ENCODE measurements at regions of chrX and their contacts with region 1.

Region 1: DNA sequence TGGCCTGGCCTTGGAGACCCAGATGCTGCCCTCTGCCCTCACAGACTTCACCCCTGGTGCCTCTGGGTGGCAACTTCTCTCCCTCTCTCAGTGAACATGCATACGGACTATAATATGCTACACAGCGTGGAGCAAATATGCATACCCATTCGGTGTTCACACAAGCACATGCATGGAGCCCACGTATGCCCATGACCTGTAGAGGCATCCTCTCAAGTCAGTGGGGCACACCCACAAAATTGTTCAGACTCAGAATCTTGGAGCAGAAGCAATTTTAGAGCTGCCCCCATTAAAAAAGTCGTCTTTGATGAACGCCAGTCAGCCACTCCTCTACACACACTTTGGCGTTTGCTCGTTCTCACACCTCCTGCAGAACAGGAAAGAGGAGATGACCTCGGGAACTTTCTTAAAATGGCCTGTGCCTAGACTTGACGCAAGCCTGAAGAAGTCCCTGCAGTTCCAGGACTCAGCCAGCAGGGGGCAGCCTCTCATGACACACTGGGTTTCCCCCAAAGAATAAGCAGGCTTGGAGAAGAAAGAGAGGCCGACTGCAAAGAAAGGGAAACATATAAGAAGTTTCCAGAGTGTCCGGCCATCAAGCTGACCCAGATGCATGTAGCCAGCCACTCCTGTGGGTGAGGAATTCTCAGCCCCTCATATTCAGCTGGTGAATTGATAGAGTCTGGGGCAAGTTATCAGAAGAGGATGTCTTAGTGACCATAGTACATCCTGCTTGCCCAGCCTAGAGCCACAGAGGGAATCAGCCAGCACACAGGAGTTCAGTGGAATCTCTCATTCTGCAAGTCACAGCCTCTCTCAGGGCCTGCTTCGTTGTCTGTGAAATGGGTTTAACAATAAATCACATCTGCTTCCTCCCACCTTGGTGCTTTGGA is 17.3 kb downstream of the APLN start:
- DNase-seq: peak; percentile 58 to 92 (median 72)
- H3K4me3 ChIP-seq: no peak overlapping the region
- H3K27ac ChIP-seq: no peak overlapping the region
- H3K4me1 ChIP-seq: no peaks in the 10 kb centered on the region
- H3K27me3 ChIP-seq: no peaks in the 10 kb centered on the region
- CTCF ChIP-seq: peak; percentile 80 to 91 (median 88)
- POLR2A ChIP-seq: no peak

Region 2: DNA sequence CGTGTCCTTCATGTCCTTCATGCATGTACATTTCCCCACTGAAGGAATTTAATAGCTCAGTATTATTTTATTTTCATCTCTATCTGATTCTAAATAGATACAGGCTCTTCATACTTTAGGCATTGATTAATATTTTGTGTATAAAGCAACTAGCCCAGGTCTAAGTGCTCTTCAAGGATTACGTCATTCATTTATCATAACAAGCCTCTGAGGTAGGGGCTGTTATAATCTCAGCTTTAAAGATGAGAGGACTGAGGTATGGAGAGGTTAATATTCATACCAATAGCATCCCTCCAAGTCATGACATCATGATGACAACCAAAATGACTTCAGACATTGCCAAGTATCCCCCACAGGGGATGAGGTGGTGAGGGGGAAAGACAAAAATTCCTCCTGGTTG is 426.1 kb before region 1 on chrX:
- intact Hi-C with region 1: no loop called
- DNase-seq: no peak
- H3K4me3 ChIP-seq: no peak overlapping the region
- H3K27ac ChIP-seq: no peak overlapping the region
- H3K4me1 ChIP-seq: no peaks in the 10 kb centered on the region
- H3K27me3 ChIP-seq: peaks cover 3% of the 10 kb centered on the region
- CTCF ChIP-seq: no peak
- POLR2A ChIP-seq: no peak

Region 3: DNA sequence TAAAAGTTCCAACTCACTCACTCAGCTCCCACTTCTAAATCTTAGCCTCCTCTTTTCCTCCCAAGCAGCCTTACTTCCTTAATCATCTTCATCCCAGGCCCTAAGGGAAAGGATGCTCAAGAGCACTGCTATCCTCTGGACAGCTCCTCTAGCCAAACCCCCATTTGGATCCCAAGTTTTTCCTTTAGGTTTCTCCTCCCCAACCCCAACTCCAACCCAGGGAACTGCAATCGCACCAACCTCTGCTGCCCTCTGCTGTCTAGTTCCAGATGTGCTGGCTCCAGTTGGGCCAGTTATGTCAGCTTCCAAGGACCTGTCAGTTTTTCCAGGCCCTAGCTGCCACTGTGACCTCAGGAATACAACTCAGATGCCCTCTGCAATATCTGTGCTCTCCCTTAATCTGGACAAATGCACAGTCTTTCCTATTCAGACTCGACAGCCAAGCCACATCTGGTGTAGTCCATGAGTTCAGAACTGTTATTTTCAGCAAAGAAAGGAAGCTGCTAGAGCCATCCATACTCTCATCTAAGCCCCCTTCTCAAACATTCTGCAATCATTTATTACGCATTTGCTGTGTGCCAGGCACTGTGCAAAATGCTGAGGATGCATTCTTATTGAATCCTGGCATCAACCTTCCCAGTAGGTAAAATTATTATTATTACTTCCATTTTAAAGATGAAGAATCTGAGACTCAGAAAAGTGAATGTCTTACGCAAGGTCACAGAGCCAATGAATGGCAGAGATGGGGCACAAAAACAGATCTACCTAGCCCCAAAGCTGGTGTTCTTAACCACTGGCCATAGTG is 89.0 kb after region 1 on chrX:
- intact Hi-C with region 1: loop called (anchors 5 kb)
- DNase-seq: peak; percentile 59 to 87 (median 72)
- H3K4me3 ChIP-seq: no peak overlapping the region
- H3K27ac ChIP-seq: no peak overlapping the region
- H3K4me1 ChIP-seq: no peaks in the 10 kb centered on the region
- H3K27me3 ChIP-seq: no peaks in the 10 kb centered on the region
- CTCF ChIP-seq: peak; percentile 59 to 85 (median 82)
- POLR2A ChIP-seq: no peak